Astrocyte of the cerebellum (primary cell): ENCODE measurements at regions of chr20 and their contacts with region 1.

Region 1: GRCh38 chr20:32521780-32522525 is 63.2 kb downstream of the NOL4L start:
- DNase-seq: no peak
- H3K4me3 ChIP-seq: no peak overlapping the region
- CTCF ChIP-seq: peak; percentile 84

Region 2: DNA sequence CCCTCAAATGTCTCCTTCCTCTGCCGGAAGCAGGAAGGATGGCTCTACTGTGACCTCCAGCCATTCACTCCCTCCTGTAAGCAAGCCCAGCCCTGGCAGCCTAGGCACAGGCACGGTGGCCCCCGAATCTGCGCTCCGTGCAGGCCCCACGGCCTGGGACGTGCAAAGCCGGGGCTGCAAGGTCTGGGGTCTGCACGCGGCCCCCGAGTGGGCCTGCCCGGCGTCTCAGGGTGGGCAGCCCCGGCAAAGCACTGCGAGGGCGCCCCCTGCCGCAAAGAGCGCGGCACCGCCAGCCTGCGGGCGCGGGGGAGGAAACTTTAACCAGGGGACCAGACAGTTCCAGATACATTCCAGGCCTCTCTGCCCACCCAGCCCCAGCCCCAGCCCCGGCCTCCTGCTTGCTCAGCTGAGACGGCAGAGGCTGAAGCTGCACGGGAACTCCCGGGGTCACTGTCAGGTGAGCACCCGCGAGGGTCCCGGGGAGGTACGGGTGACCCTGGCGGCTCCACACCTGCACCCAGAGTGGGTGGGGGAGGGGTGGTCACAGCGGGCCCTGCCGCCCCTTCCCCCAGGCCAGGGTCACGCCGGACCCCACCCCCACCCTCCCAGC is 65.0 kb before region 1 on chr20:
- in situ Hi-C with region 1: no loop called
- DNase-seq: no peak
- H3K4me3 ChIP-seq: peak overlapping the region; percentile 33
- CTCF ChIP-seq: peak; percentile 76

Region 3: DNA sequence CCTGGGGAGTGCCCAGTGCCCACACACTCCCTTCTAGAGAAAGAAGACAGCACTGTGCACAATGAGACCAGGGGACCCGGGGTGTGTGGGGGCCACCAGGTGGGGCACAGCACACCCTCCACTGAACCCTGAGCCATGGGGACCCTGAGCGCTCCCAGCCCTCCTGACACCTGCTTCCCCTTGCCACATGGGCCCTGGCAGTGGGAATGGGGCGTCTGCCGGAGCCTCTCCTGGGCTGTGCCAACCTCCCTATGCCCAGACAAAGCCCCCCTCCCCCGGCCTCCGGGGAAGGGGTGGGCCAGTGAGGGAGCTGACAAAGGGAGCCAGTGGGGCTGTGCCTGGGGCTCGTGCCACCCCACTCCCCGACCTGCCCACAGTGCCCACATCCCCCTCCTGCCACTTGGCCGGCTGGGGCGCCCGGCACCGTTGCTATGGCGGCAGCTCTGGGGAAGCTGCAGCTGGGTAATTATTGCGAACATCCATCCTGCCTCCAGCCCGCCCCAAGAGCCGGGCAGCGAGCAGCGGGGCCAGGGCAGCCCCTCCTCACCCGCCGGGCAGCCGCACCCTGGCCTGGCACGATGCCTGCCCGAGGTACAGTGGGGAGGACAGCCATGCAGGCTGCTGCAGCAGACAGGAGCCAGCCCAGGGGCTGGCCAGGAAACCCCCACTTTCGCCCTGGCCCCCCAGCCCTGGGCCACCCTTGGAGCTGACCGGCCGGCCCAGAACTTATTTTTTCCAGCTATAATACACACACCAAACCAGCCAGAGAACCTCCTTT is 105.1 kb after region 1 on chr20:
- in situ Hi-C with region 1: loop called (anchors 25 kb)
- DNase-seq: no peak
- H3K4me3 ChIP-seq: no peak overlapping the region
- CTCF ChIP-seq: no peak

Region 4: DNA sequence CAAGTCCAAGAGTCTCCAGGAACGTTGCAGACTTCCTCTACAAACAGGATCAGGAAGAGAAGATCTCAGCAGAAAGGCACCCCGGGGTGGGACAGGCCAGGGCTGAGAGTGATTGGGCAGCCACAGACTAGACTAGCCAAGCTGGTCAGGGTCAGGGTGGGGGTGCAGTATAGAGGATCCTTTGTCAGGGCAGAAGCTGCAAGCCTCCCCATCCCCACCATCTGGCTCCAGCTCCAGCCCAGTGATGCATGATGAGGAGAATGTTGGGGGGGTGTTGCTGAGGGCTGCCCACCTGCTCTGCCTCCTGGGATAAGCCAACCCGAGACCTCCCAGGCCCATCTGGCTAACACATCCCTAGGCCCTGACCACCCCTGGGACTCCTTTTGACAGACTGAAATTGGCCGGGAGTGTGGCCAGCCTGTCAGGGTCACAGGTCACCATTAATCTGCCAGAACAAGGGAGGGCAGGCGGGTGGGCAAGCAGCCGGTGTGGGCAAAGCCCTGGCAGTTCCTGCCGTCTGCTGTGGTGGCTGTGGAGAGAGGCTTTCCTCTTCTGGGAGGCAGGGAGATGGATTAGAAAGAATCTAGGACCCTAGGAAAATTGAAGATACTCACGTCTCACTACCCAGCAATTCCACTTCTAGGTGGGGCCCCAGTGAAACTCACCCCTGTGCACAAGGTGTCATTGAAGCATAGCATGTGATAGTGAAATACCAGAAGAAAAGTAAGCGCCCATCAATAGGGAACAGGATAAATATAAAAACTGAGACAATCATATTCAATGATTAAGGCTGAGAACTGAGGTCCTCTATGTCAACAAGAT is 943.7 kb after region 1 on chr20:
- in situ Hi-C with region 1: no loop called
- DNase-seq: no peak
- H3K4me3 ChIP-seq: no peak overlapping the region
- CTCF ChIP-seq: no peak